ENCODE measurements at regions of chr9 and their contacts with region 1.

Region 1: GRCh38 chr9:121278535-121279261 is 10.7 kb downstream of the GSN start:
- DNase-seq: peak; percentile 66
- ATAC-seq: peak; percentile 85
- H3K4me3 Mint-ChIP-seq: no peak overlapping the region
- H3K27ac Mint-ChIP-seq: no peak overlapping the region
- H3K4me1 Mint-ChIP-seq: peaks cover 5% of the 10 kb centered on the region
- H3K27me3 Mint-ChIP-seq: no peaks in the 10 kb centered on the region

Region 2: DNA sequence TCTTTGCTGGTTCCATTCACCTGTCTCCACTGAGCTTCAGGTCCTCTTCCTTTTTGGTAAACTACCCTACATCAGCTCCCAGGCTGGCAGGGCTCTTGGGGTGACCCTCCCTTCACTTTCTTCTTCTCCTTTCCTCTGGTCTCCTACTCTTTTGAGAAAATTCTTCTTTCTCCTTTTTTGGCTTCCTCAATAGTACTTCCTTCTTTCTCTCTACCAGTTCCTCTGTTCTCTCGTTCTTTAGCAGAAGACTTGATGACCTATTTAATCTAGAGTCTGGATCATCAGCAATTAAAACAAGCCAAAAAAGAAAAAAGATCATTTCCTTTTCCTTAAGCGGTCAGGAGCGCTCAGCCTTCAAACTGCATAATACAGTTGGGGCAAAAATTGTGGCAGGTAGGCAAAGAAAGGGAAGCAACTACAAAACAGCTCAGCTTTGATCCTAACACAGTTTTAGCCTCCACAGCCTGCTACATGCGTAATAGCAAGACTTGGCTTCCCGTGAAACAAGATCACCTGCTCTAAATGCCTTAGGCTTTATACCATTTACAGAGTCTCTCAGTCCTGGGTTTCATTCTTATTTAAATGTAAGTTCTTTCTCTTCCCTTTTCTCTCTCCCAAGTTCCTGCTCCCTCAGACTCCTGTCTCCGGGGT is 24.8 kb before region 1 on chr9:
- CTCF ChIA-PET with region 1: interaction called, 26 read pairs
- POLR2A ChIA-PET with region 1: no interaction called
- DNase-seq: no peak
- ATAC-seq: no peak
- H3K4me3 Mint-ChIP-seq: no peak overlapping the region
- H3K27ac Mint-ChIP-seq: no peak overlapping the region
- H3K4me1 Mint-ChIP-seq: peaks cover 3% of the 10 kb centered on the region
- H3K27me3 Mint-ChIP-seq: no peaks in the 10 kb centered on the region

Region 3: DNA sequence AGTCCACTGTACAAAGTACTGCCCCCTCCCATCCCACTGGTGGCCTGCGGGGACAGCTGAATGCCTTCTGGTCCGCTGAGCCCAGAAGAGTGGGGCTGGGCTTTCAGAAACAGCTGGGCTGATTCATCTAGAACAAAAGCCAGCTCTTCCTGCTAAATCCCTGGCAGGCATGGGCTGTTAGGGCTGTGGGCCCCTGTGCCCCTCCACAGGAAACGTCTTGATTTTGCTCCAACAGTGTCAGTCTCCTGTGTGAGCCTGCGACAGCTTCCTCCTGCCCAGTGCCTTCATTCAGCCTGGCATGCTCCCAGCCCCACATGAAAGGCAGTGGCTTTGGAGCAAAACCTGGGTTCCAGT is 17.6 kb before region 1 on chr9:
- CTCF ChIA-PET with region 1: interaction called, 26 read pairs
- POLR2A ChIA-PET with region 1: no interaction called
- DNase-seq: no peak
- ATAC-seq: no peak
- H3K4me3 Mint-ChIP-seq: no peak overlapping the region
- H3K27ac Mint-ChIP-seq: no peak overlapping the region
- H3K4me1 Mint-ChIP-seq: no peaks in the 10 kb centered on the region
- H3K27me3 Mint-ChIP-seq: peaks cover 2% of the 10 kb centered on the region

Region 4: GRCh38 chr9:121267689-121268597 is 10.8 kb before region 1 on chr9 and contains the start of gene GSN:
- CTCF ChIA-PET with region 1: interaction called, 30 read pairs
- POLR2A ChIA-PET with region 1: interaction called, 3 read pairs
- DNase-seq: peak; percentile 62
- ATAC-seq: peak; percentile 89
- H3K4me3 Mint-ChIP-seq: peak within 1 kb of the TSS; percentile 69
- H3K27ac Mint-ChIP-seq: no peak within 1 kb of the TSS
- H3K4me1 Mint-ChIP-seq: peaks cover 29% of the 10 kb centered on the region
- H3K27me3 Mint-ChIP-seq: peaks cover 16% of the 10 kb centered on the region
- total RNA-seq, gene GSN: 4.0 to 4.2 TPM

Measured in activated CD8-positive, alpha-beta T cell treated with anti-CD3 and anti-CD28 coated beads, Interleukin-2, amount 10 ng/mL, durations not matched to agents 7 days and 5 days (primary cell).